Activated T-helper 2 cell treated with anti-CD3 and anti-CD28 coated beads, Interferon-gamma antibody, Interleukin-2, Interleukin-4, amounts not matched to agents 10 μg/mL and 5 μg/mL and 100 μg/mL, durations not matched to agents 14 hours and 24 hours and 36 hours (primary cell): ENCODE measurements at regions of chr7 and their contacts with region 1.

Region 1: GRCh38 chr7:19117091-19117869 is at the start of gene TWIST1:
- DNase-seq: no peak
- H3K4me3 Mint-ChIP-seq: peak within 1 kb of the TSS; percentile 62
- H3K27ac Mint-ChIP-seq: no peak within 1 kb of the TSS
- H3K4me1 Mint-ChIP-seq: peaks cover 3% of the 10 kb centered on the region
- H3K27me3 Mint-ChIP-seq: peaks cover 70% of the 10 kb centered on the region
- total RNA-seq, gene TWIST1: 1.2 and 2.2 TPM in 2 replicates

Region 2: DNA sequence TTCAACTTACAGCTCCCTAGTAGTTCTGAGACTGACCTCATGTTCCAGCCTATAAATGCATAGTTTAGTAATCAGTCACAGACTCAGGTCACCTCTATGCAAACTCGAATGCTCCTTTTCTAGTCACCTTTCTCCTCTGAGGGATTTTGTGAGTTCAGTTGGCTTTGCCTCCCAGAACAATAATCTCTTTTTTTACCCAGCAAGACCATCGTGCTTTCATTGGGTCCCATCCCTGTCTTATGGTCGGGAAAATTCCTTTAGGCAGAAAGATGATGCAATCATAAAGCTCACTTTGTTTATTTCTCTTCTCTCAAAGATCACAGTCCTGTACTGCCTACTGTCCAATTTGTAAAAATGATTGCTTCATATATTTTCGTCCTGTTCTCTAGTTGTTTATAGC is 38.2 kb before region 1 on chr7:
- intact Hi-C with region 1: no loop called
- DNase-seq: no peak
- H3K4me3 Mint-ChIP-seq: no peak overlapping the region
- H3K27ac Mint-ChIP-seq: no peak overlapping the region
- H3K4me1 Mint-ChIP-seq: no peaks in the 10 kb centered on the region
- H3K27me3 Mint-ChIP-seq: no peaks in the 10 kb centered on the region

Region 3: GRCh38 chr7:19146699-19147098 is 29.4 kb after region 1 on chr7:
- intact Hi-C with region 1: loop called (anchors 2 kb)
- DNase-seq: no peak
- H3K4me3 Mint-ChIP-seq: no peak overlapping the region
- H3K27ac Mint-ChIP-seq: no peak overlapping the region
- H3K4me1 Mint-ChIP-seq: no peaks in the 10 kb centered on the region
- H3K27me3 Mint-ChIP-seq: peaks cover 43% of the 10 kb centered on the region

Region 4: DNA sequence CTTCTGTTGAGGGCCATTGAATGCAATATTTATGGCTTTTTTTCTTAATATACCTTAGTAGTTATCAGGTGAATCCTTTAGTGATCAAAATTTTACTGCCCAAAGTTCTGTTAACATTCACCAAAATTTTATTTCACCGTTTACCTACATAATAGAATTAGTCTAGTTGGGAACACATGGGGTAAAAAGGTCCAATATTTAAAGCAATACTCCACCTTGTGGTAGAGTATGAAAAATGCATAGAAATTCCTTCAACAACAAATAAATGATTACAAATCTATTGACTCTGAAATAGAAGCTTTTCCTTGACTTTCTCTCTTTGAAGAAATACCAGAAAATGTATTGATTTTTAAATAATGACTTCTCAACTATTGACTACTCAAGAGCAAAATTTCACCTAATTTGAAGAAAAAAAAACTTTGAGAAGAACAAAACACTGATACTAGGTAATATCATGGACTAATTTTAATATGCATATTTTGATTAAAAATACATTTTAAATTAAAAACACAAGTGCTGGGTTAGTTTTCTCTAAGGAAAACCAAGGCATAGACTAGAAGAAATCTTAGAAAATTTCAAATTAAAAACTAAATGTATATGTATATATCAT is 548.2 kb after region 1 on chr7:
- intact Hi-C with region 1: loop called (anchors 5 kb)
- DNase-seq: no peak
- H3K4me3 Mint-ChIP-seq: no peak overlapping the region
- H3K27ac Mint-ChIP-seq: no peak overlapping the region
- H3K4me1 Mint-ChIP-seq: peaks cover 10% of the 10 kb centered on the region
- H3K27me3 Mint-ChIP-seq: peaks cover 34% of the 10 kb centered on the region

Region 5: GRCh38 chr7:19772841-19773760 is 655.8 kb after region 1 on chr7 and contains the start of gene TMEM196:
- intact Hi-C with region 1: loop called (anchors 10 kb)
- DNase-seq: no peak
- H3K4me3 Mint-ChIP-seq: no peak within 1 kb of the TSS
- H3K27ac Mint-ChIP-seq: no peak within 1 kb of the TSS
- H3K4me1 Mint-ChIP-seq: peaks cover 5% of the 10 kb centered on the region
- H3K27me3 Mint-ChIP-seq: peaks cover 28% of the 10 kb centered on the region
- total RNA-seq, gene TMEM196: not detected in 2 replicates

Region 6: DNA sequence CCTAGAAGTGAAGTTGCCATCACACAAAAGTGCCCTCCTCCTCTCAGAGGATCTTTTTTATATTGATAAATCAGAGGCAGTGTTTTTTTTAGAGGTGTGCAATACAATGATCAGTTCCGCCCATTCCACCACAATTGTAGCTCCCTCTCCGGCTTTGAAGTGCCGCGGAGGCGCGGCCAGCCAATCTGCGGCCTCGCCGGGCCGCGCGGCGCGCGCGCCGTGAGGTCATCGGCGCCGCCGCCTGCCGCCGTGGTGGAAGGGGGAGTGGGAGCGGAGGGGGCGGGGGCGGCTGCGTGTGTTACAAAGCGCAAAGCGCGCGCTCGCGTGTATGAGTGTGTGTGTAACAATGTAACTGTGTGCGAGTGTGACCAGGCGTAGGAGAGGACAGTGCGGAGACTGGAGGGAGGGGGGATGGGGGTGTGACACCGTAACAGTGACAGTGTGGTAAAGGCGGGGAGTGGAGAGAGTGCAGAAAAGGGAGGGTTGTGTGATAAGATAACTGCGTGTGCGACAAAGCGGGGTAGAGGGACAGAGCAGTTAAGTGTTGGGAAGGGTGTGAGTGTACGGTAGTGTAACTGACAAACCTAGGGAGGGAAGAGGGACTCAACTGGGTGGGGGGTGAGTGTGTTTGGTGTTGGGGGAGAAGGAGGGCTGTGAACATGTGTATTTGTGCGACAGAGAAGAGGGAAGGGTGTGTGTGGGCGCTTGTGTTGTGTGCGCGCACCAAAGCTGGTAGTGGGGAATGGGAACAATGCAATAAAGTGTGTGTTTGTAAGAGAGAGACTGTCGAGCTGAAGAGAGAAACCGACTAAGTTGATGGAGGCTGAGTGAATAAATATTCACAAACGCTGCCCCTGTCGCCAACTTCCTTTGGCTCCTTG is 1669.7 kb after region 1 on chr7 and contains the start of gene SP8:
- intact Hi-C with region 1: loop called (anchors 5 kb)
- DNase-seq: no peak
- H3K4me3 Mint-ChIP-seq: peak within 1 kb of the TSS; percentile 38
- H3K27ac Mint-ChIP-seq: peak within 1 kb of the TSS; percentile 59
- H3K4me1 Mint-ChIP-seq: peaks cover 15% of the 10 kb centered on the region
- H3K27me3 Mint-ChIP-seq: peaks cover 74% of the 10 kb centered on the region
- total RNA-seq, gene SP8: not detected in 2 replicates